ENCODE measurements at regions of chr9 and their contacts with region 1.

Region 1: GRCh38 chr9:20622330-20623020 is at the start of gene MLLT3:
- DNase-seq: peak; percentile 98
- H3K4me3 ChIP-seq: peak within 1 kb of the TSS; percentile 76
- H3K27ac ChIP-seq: peak within 1 kb of the TSS; percentile 93
- H3K4me1 ChIP-seq: peaks cover 5% of the 10 kb centered on the region
- H3K27me3 ChIP-seq: no peaks in the 10 kb centered on the region
- CTCF ChIP-seq: no peak
- total RNA-seq, gene MLLT3: 44.6 to 65.2 TPM

Region 2: DNA sequence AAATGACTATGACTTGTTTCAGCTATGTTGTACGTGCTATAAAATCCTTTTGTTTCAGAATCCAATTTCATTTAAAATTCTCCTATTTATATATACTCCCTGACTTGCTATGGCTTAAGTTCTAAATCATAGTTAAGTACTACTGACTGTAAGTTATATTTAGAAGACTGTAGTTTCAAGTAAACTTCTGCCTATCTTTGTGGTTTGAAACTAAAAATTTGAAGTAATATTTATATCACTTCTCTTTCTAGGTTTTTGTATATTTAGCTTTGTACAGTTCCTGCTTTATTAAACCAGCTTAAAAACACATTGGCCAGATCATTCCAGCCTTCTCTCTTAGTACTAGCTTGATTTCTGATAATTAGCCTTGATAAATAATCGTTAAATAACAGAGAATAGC is 196.5 kb before region 1 on chr9:
- intact Hi-C with region 1: no loop called
- DNase-seq: no peak
- H3K4me3 ChIP-seq: no peak overlapping the region
- H3K27ac ChIP-seq: no peak overlapping the region
- H3K4me1 ChIP-seq: no peaks in the 10 kb centered on the region
- H3K27me3 ChIP-seq: no peaks in the 10 kb centered on the region
- CTCF ChIP-seq: no peak

Region 3: DNA sequence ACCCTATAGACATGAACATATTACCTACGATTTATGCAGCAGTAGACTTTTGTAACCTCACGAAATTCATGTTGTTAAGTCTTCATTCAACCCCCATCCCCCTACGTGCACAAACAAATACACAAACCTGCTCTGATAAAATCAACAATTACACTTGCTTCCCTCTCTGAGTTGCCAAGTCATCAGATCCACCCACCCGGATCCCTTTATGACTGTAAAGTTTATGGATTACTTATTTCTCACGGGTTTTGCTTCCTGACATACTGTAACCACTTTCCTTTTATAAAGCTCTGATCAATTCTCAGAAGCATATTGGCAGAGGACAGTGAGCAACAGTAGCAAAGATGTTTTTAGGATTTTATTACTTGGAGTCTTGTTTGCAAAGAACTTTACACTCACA is 70.7 kb before region 1 on chr9:
- intact Hi-C with region 1: no loop called
- DNase-seq: peak; percentile 69
- H3K4me3 ChIP-seq: no peak overlapping the region
- H3K27ac ChIP-seq: peak overlapping the region; percentile 80
- H3K4me1 ChIP-seq: peaks cover 11% of the 10 kb centered on the region
- H3K27me3 ChIP-seq: no peaks in the 10 kb centered on the region
- CTCF ChIP-seq: no peak

Region 4: DNA sequence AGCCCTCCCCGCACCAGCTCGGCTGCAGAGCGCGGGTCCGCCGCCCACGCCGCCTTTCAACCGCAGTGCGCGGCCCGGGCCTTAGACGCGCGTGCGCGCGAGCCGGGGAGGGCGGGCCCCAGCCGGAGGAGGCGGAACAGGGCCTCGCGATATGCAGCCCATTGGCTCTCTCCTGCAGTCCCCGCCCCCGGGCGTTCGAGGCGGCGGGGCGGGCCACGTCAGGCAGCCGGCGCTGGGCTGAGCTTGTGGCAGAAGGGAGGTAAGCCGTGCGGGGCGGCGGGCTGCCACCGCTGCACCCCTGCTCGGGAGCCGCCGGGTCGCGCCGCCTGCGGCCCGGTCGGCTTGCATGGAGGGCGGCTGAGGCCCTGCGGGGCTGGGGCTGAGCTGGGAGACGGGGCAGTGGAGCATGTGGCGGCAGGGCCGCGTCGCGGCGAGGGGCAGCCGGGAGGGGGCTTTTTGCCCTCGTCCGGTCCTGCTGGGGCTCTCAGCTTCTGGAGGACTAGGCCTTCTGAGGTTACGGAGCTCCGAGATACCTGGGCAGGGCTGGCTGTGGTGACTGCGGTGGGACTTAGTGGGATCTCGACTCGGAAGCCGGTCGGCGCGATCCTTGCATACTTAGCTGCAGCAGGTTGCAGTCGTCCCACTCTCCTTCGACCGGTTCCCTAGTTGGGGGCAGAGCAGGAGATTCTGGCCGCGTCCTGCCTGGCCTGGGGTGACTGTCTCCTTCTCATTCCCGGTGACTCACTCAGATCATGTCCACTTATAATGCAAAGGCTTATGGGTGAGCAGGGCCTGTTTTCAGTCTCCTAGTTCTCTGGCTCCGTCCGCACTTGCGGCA is 61.8 kb after region 1 on chr9 and contains the start of gene FOCAD:
- intact Hi-C with region 1: loop called (anchors 5 kb)
- DNase-seq: peak; percentile 96
- H3K4me3 ChIP-seq: peak within 1 kb of the TSS; percentile 73
- H3K27ac ChIP-seq: peak within 1 kb of the TSS; percentile 93
- H3K4me1 ChIP-seq: peaks cover 3% of the 10 kb centered on the region
- H3K27me3 ChIP-seq: no peaks in the 10 kb centered on the region
- CTCF ChIP-seq: no peak
- total RNA-seq, gene FOCAD: 26.8 to 44.3 TPM

Region 5: GRCh38 chr9:20835364-20836286 is 213.2 kb after region 1 on chr9:
- intact Hi-C with region 1: no loop called
- DNase-seq: no peak
- H3K4me3 ChIP-seq: no peak overlapping the region
- H3K27ac ChIP-seq: no peak overlapping the region
- H3K4me1 ChIP-seq: no peaks in the 10 kb centered on the region
- H3K27me3 ChIP-seq: no peaks in the 10 kb centered on the region
- CTCF ChIP-seq: no peak

Region 6: GRCh38 chr9:20884985-20885593 is 262.6 kb after region 1 on chr9:
- intact Hi-C with region 1: loop called (anchors 10 kb)
- DNase-seq: peak; percentile 59
- H3K4me3 ChIP-seq: no peak overlapping the region
- H3K27ac ChIP-seq: no peak overlapping the region
- H3K4me1 ChIP-seq: no peaks in the 10 kb centered on the region
- H3K27me3 ChIP-seq: no peaks in the 10 kb centered on the region
- CTCF ChIP-seq: peak; percentile 69

Region 7: DNA sequence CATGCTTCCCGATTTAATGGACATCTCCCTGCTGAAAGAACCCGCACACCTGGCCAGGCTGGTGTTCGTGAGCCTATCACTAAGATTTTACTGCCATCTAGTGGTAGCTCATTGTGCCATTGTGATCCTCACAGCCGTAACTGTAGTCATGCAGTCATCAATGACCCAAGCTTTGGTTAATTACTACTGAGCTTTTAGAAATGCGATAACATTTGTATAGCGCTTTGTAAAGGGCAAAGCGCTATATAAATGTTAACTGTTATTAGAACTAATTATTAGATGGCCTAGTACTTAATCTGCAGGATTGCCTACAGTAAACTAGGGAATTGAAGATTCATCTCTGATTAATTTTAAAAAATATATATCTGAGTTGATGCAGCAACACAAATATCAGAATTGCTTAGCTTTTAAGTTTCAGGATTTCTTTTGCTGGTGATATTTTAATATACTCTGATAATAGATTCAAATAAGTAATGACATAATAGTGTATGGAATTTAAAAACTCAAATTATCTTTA is 318.8 kb after region 1 on chr9:
- intact Hi-C with region 1: loop called (anchors 5 kb)
- DNase-seq: peak; percentile 57
- H3K4me3 ChIP-seq: no peak overlapping the region
- H3K27ac ChIP-seq: no peak overlapping the region
- H3K4me1 ChIP-seq: no peaks in the 10 kb centered on the region
- H3K27me3 ChIP-seq: no peaks in the 10 kb centered on the region
- CTCF ChIP-seq: peak; percentile 70

Measured in colonic mucosa (tissue), 4 donors.